Activated CD4-positive, alpha-beta T cell treated with anti-CD3 and anti-CD28 coated beads for 36 hours (primary cell): ENCODE measurements at regions of chr9 and their contacts with region 1.

Region 1: DNA sequence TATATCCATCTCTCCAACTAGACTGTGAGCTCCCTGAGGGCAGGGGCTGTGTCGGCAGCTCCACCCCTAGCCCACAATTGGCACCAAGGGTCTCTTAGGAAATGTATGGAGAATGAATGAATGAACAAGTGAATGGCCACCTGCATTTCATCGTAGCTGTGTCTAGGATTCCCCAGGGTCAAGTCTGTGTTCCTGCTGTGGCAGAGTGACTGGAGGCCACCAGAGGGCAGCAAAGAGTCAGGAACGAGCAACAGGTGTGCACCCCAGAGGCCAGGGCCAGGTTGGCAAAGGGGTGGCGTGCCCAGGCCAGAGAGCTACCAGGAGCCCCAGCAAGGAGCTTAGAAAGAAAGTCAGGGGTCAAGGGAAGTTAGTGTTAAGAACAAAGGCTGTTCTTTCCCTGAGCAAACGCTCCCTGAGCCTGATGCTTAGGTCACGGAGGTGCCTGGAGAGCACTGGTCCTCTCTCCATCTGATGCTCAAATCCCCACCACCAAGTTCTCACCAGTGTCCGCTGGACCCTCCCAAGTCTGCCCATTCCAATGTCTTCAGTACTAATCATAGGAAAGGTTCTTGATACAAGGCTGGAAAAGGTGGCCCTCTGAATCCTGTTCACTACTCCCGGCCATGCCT is 160.7 kb downstream of the PAX5 start:
- DNase-seq: peak; percentile 89
- ATAC-seq: peak; percentile 95
- H3K4me3 Mint-ChIP-seq: no peak overlapping the region
- H3K27ac Mint-ChIP-seq: no peak overlapping the region
- H3K4me1 Mint-ChIP-seq: no peaks in the 10 kb centered on the region
- H3K27me3 Mint-ChIP-seq: peaks cover 2% of the 10 kb centered on the region

Region 2: GRCh38 chr9:36772450-36773403 is 100.6 kb before region 1 on chr9:
- CTCF ChIA-PET with region 1: no interaction called
- POLR2A ChIA-PET with region 1: no interaction called
- intact Hi-C with region 1: no loop called
- DNase-seq: no peak
- ATAC-seq: no peak
- H3K4me3 Mint-ChIP-seq: no peak overlapping the region
- H3K27ac Mint-ChIP-seq: no peak overlapping the region
- H3K4me1 Mint-ChIP-seq: no peaks in the 10 kb centered on the region
- H3K27me3 Mint-ChIP-seq: peaks cover 12% of the 10 kb centered on the region

Region 3: GRCh38 chr9:36884721-36885120 is 11.4 kb after region 1 on chr9:
- CTCF ChIA-PET with region 1: interaction called, 22 read pairs
- POLR2A ChIA-PET with region 1: no interaction called
- intact Hi-C with region 1: no loop called
- DNase-seq: no peak
- ATAC-seq: no peak
- H3K4me3 Mint-ChIP-seq: no peak overlapping the region
- H3K27ac Mint-ChIP-seq: no peak overlapping the region
- H3K4me1 Mint-ChIP-seq: no peaks in the 10 kb centered on the region
- H3K27me3 Mint-ChIP-seq: peaks cover 12% of the 10 kb centered on the region

Region 4: DNA sequence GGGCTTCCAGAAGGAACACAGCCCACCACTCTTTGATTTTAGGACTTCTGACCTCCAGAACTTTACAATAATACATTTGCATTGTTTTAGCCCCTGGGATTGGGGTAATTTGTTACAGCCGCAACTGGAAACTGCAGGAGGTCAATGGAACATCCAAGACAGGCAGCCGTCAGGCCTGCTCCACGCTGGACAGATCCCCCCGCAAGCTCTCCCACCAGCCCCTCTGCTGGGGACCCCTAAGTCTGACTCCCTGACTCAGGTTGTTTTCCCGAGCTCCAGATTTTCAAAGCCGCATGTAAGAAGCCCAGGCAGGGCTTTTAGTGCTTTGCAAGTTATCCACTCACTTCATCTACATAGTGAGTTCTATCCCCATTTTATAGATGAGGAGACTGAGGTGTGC is 33.1 kb after region 1 on chr9:
- CTCF ChIA-PET with region 1: interaction called, 16 read pairs
- POLR2A ChIA-PET with region 1: no interaction called
- intact Hi-C with region 1: no loop called
- DNase-seq: no peak
- ATAC-seq: no peak
- H3K4me3 Mint-ChIP-seq: no peak overlapping the region
- H3K27ac Mint-ChIP-seq: no peak overlapping the region
- H3K4me1 Mint-ChIP-seq: no peaks in the 10 kb centered on the region
- H3K27me3 Mint-ChIP-seq: peaks cover 26% of the 10 kb centered on the region

Region 5: DNA sequence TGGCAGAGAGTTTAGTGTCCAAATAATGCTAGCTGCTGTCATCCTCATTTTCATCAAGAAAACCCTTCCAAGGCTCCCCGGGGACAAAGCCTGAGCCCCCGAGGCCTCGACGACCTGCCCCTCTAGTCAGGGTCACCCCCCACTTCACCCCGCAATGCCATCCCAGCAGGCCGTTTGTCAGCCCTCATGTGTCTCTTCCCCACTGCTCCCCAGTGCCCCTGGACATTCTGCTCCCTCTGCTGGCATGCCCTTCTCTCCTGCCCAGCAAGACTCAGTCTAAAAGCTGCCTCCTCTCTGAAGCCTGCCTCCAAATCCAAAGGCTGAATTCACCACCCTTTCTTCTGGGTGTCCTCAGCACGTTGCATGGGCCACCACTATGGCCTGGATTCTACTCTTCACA is 101.4 kb after region 1 on chr9:
- CTCF ChIA-PET with region 1: interaction called, 8 read pairs
- POLR2A ChIA-PET with region 1: no interaction called
- intact Hi-C with region 1: loop called in 1 of 2 experiments (anchors 5 kb)
- DNase-seq: peak; percentile 18
- ATAC-seq: no peak
- H3K4me3 Mint-ChIP-seq: no peak overlapping the region
- H3K27ac Mint-ChIP-seq: no peak overlapping the region
- H3K4me1 Mint-ChIP-seq: no peaks in the 10 kb centered on the region
- H3K27me3 Mint-ChIP-seq: peaks cover 16% of the 10 kb centered on the region

Region 6: GRCh38 chr9:37329576-37329975 is 456.2 kb after region 1 on chr9:
- CTCF ChIA-PET with region 1: interaction called, 3 read pairs
- POLR2A ChIA-PET with region 1: no interaction called
- intact Hi-C with region 1: loop called (anchors 10 kb)
- DNase-seq: peak; percentile 14
- ATAC-seq: no peak
- H3K4me3 Mint-ChIP-seq: no peak overlapping the region
- H3K27ac Mint-ChIP-seq: no peak overlapping the region
- H3K4me1 Mint-ChIP-seq: no peaks in the 10 kb centered on the region
- H3K27me3 Mint-ChIP-seq: no peaks in the 10 kb centered on the region

Region 7: GRCh38 chr9:37408933-37409710 is 535.8 kb after region 1 on chr9:
- CTCF ChIA-PET with region 1: no interaction called
- POLR2A ChIA-PET with region 1: no interaction called
- intact Hi-C with region 1: loop called in 1 of 2 experiments (anchors 10 kb)
- DNase-seq: peak; percentile 86
- ATAC-seq: peak; percentile 82
- H3K4me3 Mint-ChIP-seq: no peak overlapping the region
- H3K27ac Mint-ChIP-seq: no peak overlapping the region
- H3K4me1 Mint-ChIP-seq: peaks cover 31% of the 10 kb centered on the region
- H3K27me3 Mint-ChIP-seq: no peaks in the 10 kb centered on the region